Ascending aorta (tissue), 2 donors: ENCODE measurements at regions of chr11 and their contacts with region 1.

Region 1: DNA sequence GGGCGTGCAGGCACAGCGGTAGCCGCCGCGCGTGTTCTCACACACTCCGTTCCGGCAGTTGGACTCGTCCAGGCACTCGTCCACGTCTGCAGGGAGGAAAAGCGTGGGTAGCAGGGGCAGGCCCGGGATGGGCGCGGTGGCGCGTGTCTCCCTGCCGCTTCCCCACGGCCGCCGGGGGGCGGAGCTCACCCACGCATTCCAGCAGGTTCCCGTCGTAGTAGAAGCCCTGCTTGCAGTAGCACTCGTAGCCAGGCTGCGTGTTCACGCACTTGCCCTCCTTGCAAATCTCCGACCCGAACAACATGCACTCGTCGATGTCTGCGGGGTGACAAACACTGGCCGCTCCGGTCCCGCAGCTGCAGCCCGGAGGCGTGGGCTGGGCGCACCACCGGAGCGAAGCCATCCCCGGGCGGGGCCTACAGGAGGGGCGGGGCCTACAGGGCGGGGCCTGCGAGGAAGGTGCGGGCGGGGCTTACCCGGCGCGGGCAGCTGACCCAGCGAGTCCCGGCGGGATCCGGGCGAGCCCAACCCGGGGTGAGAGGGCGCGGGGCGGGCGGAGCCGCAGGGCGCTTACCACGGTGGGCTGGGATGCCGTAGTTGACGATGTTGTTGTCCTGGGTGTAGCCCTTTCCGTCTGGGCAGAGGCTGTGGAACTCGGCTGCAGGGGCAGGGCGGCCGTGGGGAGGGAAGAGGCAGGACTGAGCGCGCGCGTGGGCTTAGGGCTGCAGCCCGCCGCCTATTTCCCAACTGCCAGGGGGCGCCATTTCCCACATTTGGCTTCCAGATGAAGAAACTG is 15.6 kb downstream of the SCYL1 start:
- DNase-seq: peak; percentile 54 to 94
- H3K4me3 ChIP-seq: peak overlapping the region; percentile 58 to 68
- H3K27ac ChIP-seq: peak overlapping the region; percentile 80 to 90
- H3K4me1 ChIP-seq: peaks cover 16 to 22% of the 10 kb centered on the region in 2 donors
- H3K27me3 ChIP-seq: no peaks in the 10 kb centered on the region
- CTCF ChIP-seq: peak; percentile 85 to 98 (median 94)

Region 2: DNA sequence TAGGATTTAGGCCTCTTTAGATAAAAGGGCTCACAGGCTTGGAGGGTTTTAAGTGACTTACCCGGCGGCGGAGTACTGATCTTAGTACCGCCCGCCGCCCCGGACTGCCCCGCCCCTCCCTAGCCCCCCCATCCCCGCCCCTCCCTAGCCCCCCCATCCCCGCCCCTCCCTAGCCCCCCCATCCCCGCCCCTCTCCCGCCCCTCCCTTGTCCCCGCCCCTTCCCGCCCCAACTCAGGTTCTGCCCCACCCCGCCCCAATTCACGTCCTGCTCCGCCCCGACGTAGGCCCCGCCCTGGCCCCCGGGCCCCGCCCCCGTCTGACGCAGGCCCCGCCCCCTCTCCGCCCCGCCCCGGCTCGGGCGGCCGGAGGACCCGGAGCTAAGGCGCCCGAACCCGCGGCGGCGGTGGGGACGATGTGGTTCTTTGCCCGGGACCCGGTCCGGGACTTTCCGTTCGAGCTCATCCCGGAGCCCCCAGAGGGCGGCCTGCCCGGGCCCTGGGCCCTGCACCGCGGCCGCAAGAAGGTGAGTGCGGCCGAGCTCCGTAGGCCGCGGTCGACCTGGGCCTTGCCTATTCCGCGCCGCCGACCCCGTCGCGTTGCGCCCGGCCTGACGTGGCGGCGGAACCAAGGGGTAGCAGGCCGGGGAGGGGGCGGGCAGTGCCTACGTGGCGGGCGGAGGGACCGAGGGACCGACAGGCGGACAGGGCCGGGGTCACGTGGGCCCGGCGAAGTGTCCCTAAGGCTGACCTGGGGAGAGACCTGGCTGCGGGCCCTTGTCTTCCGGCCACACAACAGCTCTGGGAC is 15.6 kb before region 1 on chr11 and contains the start of gene SCYL1:
- intact Hi-C with region 1: loop called (anchors 1 kb)
- DNase-seq: peak in 1 of 2 donors; percentile 86
- H3K4me3 ChIP-seq: peak within 1 kb of the TSS; percentile 70 to 90
- H3K27ac ChIP-seq: peak within 1 kb of the TSS; percentile 83 to 95
- H3K4me1 ChIP-seq: peaks cover 16 to 18% of the 10 kb centered on the region in 2 donors
- H3K27me3 ChIP-seq: no peaks in the 10 kb centered on the region
- CTCF ChIP-seq: no peak
- total RNA-seq, gene SCYL1: 220 TPM

Region 3: GRCh38 chr11:65558002-65558931 is 17.8 kb after region 1 on chr11 and contains the start of gene LTBP3:
- intact Hi-C with region 1: loop called (anchors 1 kb)
- DNase-seq: peak in 1 of 2 donors; percentile 93
- H3K4me3 ChIP-seq: peak within 1 kb of the TSS; percentile 79 to 82
- H3K27ac ChIP-seq: peak within 1 kb of the TSS; percentile 97 to 99
- H3K4me1 ChIP-seq: peaks cover 26 to 69% of the 10 kb centered on the region in 2 donors
- H3K27me3 ChIP-seq: no peaks in the 10 kb centered on the region
- CTCF ChIP-seq: no peak
- total RNA-seq, gene LTBP3: 702 TPM

Region 4: GRCh38 chr11:65593518-65594298 is 53.2 kb after region 1 on chr11:
- intact Hi-C with region 1: loop called (anchors 1 kb)
- DNase-seq: no peak
- H3K4me3 ChIP-seq: no peak overlapping the region
- H3K27ac ChIP-seq: no peak overlapping the region
- H3K4me1 ChIP-seq: peaks cover 0 to under 1% of the 10 kb centered on the region in 2 donors
- H3K27me3 ChIP-seq: no peaks in the 10 kb centered on the region
- CTCF ChIP-seq: peak; percentile 51 to 74 (median 71)

Region 5: GRCh38 chr11:65652511-65653231 is 112.2 kb after region 1 on chr11:
- intact Hi-C with region 1: loop called (anchors 5 kb)
- DNase-seq: peak; percentile 71 to 96
- H3K4me3 ChIP-seq: peak overlapping the region; percentile 51 to 62
- H3K27ac ChIP-seq: peak overlapping the region; percentile 89 to 93
- H3K4me1 ChIP-seq: peaks cover 12 to 17% of the 10 kb centered on the region in 2 donors
- H3K27me3 ChIP-seq: no peaks in the 10 kb centered on the region
- CTCF ChIP-seq: no peak